Heart left ventricle (tissue), 16 donors: ENCODE measurements at regions of chr4 and their contacts with region 1.

Region 1: DNA sequence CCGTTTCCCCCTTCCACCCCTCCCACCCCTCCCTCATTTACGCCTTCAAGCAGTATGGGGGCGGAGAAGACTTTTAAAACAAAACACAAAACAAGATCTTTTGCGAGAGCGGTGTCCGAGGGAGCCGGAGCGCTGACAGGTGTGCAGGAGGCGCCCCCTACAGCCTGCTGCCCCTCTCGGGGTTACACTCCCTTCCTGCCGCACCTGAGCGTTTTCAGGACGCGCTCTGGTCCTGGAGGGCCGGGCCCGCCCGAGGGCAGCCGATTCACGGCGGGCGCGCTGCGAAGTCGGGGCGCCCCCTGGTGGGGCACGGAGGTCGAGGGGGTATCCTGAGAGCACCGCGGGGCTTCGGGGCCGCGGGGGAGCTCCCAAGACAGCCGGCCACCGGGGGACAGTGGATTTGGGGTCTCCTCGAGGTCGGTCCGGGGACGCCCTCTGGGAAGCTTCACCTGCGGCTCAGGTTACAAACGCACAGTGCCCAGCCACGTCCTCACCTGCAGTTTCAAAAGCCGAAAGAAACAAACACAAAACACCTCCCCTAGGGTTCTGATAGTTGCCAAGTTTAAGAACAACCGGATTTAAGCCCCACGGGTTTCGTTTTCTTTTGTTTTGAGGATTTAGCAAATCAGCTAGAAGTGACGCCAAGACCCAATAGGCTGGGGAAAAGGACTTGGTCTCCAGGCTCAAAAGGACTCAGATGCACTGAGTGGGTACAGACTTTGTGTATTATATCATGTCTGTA is 8.0 kb upstream of the NEUROG2 start:
- DNase-seq: peak in 3 of 5 donors; percentile 46 to 83 (median 51)
- ATAC-seq: peak in 3 of 4 donors; percentile 60 to 75 (median 73)
- H3K4me3 ChIP-seq: peak overlapping the region in 11 of 12 donors; percentile 6 to 55 (median 31)
- H3K27ac ChIP-seq: no peak overlapping the region
- H3K4me1 ChIP-seq: peaks cover 0 to 30% (median 9%) of the 10 kb centered on the region in 12 donors
- H3K27me3 ChIP-seq: peaks cover 43 to 85% (median 63%) of the 10 kb centered on the region in 9 donors
- CTCF ChIP-seq: peak; percentile 53 to 72 (median 62)
- POLR2A ChIP-seq: no peak

Region 2: GRCh38 chr4:111943795-111944203 is 580.1 kb before region 1 on chr4:
- intact Hi-C with region 1: no loop called
- DNase-seq: no peak
- ATAC-seq: peak in 1 of 4 donors; percentile 54
- H3K4me3 ChIP-seq: no peak overlapping the region
- H3K27ac ChIP-seq: no peak overlapping the region
- H3K4me1 ChIP-seq: no peaks in the 10 kb centered on the region
- H3K27me3 ChIP-seq: no peaks in the 10 kb centered on the region
- CTCF ChIP-seq: peak in 3 of 12 donors; percentile 9 to 26 (median 15)
- POLR2A ChIP-seq: no peak

Region 3: GRCh38 chr4:112075129-112075753 is 448.7 kb before region 1 on chr4:
- intact Hi-C with region 1: loop called in 1 of 10 experiments (anchors 10 kb)
- DNase-seq: no peak
- ATAC-seq: peak in 3 of 4 donors; percentile 62 to 76 (median 66)
- H3K4me3 ChIP-seq: no peak overlapping the region
- H3K27ac ChIP-seq: no peak overlapping the region
- H3K4me1 ChIP-seq: peaks cover 0 to 3% (median 0%) of the 10 kb centered on the region in 12 donors
- H3K27me3 ChIP-seq: no peaks in the 10 kb centered on the region
- CTCF ChIP-seq: peak; percentile 52 to 81 (median 72)
- POLR2A ChIP-seq: no peak

Region 4: DNA sequence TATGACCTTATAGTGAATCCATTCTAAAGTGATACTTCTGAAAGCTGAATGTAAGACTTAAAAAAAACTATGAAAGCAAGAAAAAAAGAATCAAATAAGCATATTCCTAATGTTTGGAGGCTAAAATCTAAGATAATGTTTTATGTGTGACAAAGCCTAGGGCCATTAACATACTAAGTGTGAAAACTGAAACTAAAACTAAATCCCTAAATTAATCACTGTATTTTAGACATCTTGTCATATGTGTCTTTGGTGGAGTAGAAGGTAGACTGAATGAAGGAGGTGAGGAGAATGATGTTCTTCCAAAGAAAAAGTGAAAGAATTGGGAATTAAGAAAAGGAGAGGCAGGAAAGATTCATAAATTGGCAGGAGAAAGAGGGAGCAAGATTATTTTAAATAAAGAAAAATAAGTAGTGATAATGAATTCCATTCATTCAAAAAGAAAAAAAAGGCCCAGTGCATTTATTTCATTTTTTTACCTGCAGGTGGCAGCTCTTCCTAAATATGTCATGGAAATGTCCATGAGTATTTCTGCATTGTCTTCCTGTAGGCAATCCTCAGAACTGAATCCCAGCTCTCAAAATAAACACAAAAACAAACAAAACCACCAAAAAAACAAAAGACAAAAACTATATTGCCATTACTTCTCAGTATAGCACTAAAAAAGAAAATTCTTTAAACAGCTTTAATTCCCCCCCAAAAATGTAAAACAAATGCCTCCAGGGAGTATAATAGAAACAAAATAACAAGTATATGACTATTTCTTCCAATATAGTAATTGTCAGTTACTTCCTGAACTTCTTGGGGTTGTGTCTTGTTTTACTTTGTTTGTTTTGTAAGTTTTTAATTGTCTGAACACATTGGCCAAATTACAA is 309.3 kb before region 1 on chr4:
- intact Hi-C with region 1: loop called in 1 of 10 experiments (anchors 10 kb)
- DNase-seq: no peak
- ATAC-seq: no peak
- H3K4me3 ChIP-seq: no peak overlapping the region
- H3K27ac ChIP-seq: peak overlapping the region in 1 of 12 donors; percentile 29
- H3K4me1 ChIP-seq: peaks cover 0 to 23% (median 0%) of the 10 kb centered on the region in 12 donors
- H3K27me3 ChIP-seq: no peaks in the 10 kb centered on the region
- CTCF ChIP-seq: peak in 10 of 12 donors; percentile 20 to 61 (median 47)
- POLR2A ChIP-seq: no peak

Region 5: DNA sequence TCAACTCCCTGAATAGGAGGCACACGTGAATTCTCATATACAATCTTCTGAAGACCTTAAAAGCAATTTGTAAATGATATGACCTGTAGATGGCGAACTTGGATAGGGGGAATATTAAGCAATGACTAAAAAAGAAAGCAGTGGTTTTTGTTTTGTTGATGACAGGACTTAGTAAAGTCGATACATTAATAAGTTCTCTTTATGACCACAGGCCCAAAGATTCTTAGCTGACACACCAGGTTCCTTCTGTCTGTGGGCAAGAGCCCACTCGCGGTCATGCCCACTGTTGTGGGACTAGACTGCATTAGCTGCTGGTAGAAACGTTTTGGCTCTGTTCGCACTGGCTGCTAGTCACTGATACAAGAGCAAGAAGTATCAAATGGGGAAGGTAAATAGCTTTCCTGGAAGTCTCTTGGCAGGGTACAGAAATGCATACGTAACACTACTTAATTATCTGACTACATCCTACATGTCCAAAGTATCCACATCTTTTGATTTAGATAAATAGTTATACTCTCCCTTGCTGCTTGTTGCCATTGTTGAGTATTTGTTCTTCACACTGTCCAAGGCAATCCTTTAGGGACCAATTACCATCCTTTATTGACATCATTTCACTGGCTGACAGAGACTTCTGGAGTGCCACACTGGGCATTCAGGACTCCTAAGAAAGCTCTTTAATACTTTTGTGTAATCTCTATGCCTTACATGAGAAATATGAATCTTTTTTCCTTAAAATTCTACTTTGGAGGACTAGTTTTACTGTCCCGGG is 195.8 kb before region 1 on chr4:
- intact Hi-C with region 1: loop called in 9 of 10 experiments (anchors 5 to 10 kb)
- DNase-seq: no peak
- ATAC-seq: peak in 2 of 4 donors; percentile 37 to 43
- H3K4me3 ChIP-seq: no peak overlapping the region
- H3K27ac ChIP-seq: no peak overlapping the region
- H3K4me1 ChIP-seq: peaks cover 0 to 19% (median 0%) of the 10 kb centered on the region in 12 donors
- H3K27me3 ChIP-seq: no peaks in the 10 kb centered on the region
- CTCF ChIP-seq: peak; percentile 37 to 63 (median 50)
- POLR2A ChIP-seq: no peak

Region 6: GRCh38 chr4:112492321-112492720 is 31.6 kb before region 1 on chr4:
- intact Hi-C with region 1: no loop called
- DNase-seq: no peak
- ATAC-seq: no peak
- H3K4me3 ChIP-seq: no peak overlapping the region
- H3K27ac ChIP-seq: no peak overlapping the region
- H3K4me1 ChIP-seq: no peaks in the 10 kb centered on the region
- H3K27me3 ChIP-seq: peaks cover 0 to 3% (median 0%) of the 10 kb centered on the region in 9 donors
- CTCF ChIP-seq: no peak
- POLR2A ChIP-seq: no peak

Region 7: GRCh38 chr4:114495471-114495928 is 1971.6 kb after region 1 on chr4:
- intact Hi-C with region 1: no loop called
- DNase-seq: no peak
- ATAC-seq: no peak
- H3K4me3 ChIP-seq: no peak overlapping the region
- H3K27ac ChIP-seq: no peak overlapping the region
- H3K4me1 ChIP-seq: no peaks in the 10 kb centered on the region
- H3K27me3 ChIP-seq: no peaks in the 10 kb centered on the region
- CTCF ChIP-seq: no peak
- POLR2A ChIP-seq: no peak